ENCODE measurements at regions of chr10 and their contacts with region 1.

Region 1: GRCh38 chr10:17228091-17228940 is at the start of gene VIM:
- DNase-seq: peak; percentile 94
- ATAC-seq: peak; percentile 43
- H3K4me3 Mint-ChIP-seq: peak within 1 kb of the TSS; percentile 91
- H3K27ac Mint-ChIP-seq: peak within 1 kb of the TSS; percentile 96
- H3K4me1 Mint-ChIP-seq: peaks cover 49% of the 10 kb centered on the region
- H3K27me3 Mint-ChIP-seq: no peaks in the 10 kb centered on the region
- total RNA-seq, gene VIM: 2,550 to 2,568 TPM

Region 2: GRCh38 chr10:16817125-16818019 is 410.9 kb before region 1 on chr10 and contains the start of gene RSU1:
- CTCF ChIA-PET with region 1: interaction called, 5 read pairs
- POLR2A ChIA-PET with region 1: interaction called, 31 read pairs
- DNase-seq: peak; percentile 100
- ATAC-seq: peak; percentile 98
- H3K4me3 Mint-ChIP-seq: peak within 1 kb of the TSS; percentile 89
- H3K27ac Mint-ChIP-seq: peak within 1 kb of the TSS; percentile 95
- H3K4me1 Mint-ChIP-seq: peaks cover 27% of the 10 kb centered on the region
- H3K27me3 Mint-ChIP-seq: peaks cover 9% of the 10 kb centered on the region
- total RNA-seq, gene RSU1: 71.9 to 74.1 TPM

Region 3: DNA sequence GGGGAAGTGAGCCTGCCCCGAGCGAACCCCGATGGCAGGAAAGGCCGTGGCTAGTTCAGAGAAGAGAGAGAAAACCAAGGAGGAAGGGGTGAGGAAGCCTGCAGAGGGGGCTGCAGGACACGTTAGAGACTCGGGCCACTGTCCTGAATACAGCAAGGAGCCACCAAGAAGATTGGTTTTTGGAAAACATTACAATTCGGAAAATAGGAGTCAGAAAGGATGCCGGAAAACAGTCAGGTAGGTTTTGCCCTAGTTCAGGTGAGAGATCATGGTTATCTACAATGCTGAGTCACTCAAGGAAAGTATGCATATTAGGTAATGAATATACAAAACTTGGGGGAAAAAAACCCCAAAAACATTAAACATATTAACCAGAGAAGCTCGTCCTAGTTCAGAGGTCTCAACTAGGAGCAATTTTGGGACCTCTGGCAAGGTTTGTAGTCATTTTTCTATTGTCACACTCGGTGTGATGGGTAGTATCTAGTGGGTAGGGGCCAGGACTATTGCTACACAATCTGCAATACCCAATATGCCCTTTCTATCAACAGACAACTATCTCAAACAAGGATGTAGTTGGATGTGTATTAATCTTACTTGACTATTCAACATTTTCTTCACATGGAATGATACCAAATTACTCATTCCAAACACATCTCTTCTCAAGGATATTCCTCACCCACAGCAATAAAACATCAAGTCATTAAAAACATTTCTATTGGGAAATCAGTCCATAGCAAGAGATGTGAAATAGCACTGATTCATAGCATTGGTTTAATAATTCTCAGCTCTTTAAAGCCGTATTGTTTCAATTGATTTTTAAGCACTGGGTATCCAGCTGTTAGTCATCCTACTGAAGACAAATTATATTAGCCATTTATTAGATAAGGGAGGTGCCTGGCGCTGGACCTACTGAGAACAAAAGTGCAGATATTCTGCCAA is 336.7 kb before region 1 on chr10:
- CTCF ChIA-PET with region 1: interaction called, 5 read pairs
- POLR2A ChIA-PET with region 1: interaction called, 16 read pairs
- DNase-seq: peak; percentile 70
- ATAC-seq: peak; percentile 86
- H3K4me3 Mint-ChIP-seq: peak overlapping the region; percentile 62
- H3K27ac Mint-ChIP-seq: peak overlapping the region; percentile 64
- H3K4me1 Mint-ChIP-seq: peaks cover 15% of the 10 kb centered on the region
- H3K27me3 Mint-ChIP-seq: peaks cover 2% of the 10 kb centered on the region

Region 4: DNA sequence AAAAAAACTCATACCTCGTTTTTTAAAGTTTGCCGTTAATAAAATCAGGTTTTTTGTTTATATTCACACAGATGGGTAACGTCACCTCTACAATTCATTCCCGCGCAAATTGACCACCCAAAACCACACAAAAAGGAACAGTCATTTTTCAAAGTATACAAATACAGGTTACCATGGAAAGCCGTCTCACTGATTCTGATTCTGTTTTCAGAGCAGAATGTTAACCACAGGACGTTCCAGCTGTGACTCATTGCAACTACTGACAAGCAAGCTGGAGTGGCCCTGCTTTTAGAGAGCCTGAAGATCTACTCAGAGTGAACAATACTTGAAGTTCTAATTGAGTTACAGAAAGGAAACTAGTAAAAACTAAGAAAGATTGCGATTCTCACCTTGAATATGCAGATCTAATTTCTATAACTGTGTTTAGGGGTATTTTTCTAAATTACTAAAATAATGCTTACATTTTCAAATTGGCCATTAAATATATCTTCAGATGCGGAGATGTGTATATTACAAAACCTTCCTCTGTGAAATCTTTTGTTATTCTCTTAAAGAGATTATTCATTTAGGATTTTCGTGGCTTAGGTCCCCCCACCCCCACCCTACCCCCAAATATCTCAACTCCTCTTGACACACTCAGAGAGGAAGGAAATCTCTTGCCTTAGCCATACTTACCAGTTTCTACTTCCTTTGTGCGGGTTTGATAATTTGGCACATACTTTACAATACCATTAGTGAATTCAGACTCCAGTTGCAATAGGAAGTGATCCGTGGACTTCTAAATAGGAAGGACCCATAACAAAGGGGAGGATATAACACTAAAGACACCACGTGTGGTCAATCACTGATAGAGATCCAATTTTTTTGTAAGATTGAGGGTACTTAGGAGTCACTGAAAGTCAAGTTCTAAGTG is 204.7 kb before region 1 on chr10:
- CTCF ChIA-PET with region 1: interaction called, 19 read pairs
- POLR2A ChIA-PET with region 1: interaction called, 127 read pairs
- DNase-seq: peak; percentile 92
- ATAC-seq: peak; percentile 73
- H3K4me3 Mint-ChIP-seq: peak overlapping the region; percentile 74
- H3K27ac Mint-ChIP-seq: peak overlapping the region; percentile 98
- H3K4me1 Mint-ChIP-seq: peaks cover 71% of the 10 kb centered on the region
- H3K27me3 Mint-ChIP-seq: no peaks in the 10 kb centered on the region

Region 5: DNA sequence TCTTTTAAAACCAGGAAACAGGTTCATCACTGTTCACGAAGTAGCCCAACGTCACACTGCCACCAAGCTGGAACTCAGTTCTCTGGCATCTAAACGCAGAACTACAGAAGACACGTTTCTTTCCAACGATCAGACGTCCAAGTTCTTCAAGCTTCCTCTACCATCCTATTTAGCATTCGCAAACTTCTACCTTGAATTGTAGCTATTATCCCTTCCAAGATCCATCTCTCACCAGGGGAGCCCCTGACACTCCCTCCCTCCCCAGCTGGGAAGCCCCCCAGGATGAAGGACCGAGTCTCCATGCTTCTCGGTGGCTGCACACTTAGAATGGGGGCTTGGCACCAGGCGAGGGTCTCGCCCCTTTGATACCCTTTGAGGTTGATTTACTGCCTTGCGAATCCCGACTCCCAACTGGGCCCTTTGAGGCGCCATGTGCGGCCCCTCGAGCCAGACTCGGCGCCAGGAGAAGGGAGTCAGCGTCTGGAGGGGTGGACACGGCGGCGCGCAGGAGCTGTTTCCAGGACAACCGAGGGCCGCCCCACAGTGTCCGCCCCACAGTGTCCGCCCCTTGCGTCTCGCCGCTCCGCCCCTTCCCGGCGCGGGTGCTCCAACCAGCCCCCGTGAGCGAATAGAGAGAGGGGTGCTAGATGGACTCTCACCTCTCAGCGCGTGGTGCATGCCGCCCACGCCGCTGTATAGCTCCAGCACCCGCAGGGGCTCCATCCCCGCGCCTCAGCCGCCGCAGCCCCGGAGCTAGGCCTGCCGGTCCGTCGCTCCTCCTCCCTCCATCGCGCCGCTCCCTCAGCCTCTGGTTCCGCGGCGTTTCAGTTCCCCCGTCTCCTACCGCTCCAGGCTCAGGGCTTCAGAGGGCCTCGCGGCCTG is 27.2 kb before region 1 on chr10 and contains the start of gene TRDMT1:
- CTCF ChIA-PET with region 1: interaction called, 38 read pairs
- POLR2A ChIA-PET with region 1: interaction called, 150 read pairs
- DNase-seq: peak; percentile 83
- ATAC-seq: peak; percentile 93
- H3K4me3 Mint-ChIP-seq: peak within 1 kb of the TSS; percentile 86
- H3K27ac Mint-ChIP-seq: peak within 1 kb of the TSS; percentile 83
- H3K4me1 Mint-ChIP-seq: peaks cover 54% of the 10 kb centered on the region
- H3K27me3 Mint-ChIP-seq: no peaks in the 10 kb centered on the region
- total RNA-seq, gene TRDMT1: 11.6 to 13.6 TPM

Region 6: GRCh38 chr10:17216217-17216900 is 12.0 kb before region 1 on chr10:
- CTCF ChIA-PET with region 1: interaction called, 35 read pairs
- POLR2A ChIA-PET with region 1: interaction called, 74 read pairs
- DNase-seq: peak; percentile 67
- ATAC-seq: peak; percentile 97
- H3K4me3 Mint-ChIP-seq: peak overlapping the region; percentile 44
- H3K27ac Mint-ChIP-seq: peak overlapping the region; percentile 86
- H3K4me1 Mint-ChIP-seq: peaks cover 52% of the 10 kb centered on the region
- H3K27me3 Mint-ChIP-seq: no peaks in the 10 kb centered on the region